Caco-2 (cell line): ENCODE measurements at regions of chr15 and their contacts with region 1.

Region 1: DNA sequence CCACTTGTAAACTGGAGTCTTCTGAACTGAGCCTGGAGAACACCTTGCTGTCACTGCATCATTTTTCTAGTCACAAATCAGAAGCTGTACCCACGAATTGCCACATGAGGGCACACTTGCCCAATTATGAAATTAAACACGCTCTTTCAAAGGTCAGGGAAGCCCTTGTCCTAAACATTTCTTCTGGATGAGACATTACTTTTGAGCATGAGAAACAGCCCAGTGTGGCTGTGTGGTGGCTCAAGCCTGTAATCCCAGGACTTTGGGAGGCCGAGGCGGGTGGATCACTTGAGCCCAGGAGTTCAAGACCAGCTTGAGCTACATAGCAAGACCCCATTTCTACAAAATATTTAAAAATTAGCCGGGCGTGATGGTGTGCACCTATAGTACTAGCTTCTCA is 27.5 kb upstream of the CFAP161 start:
- DNase-seq: peak; percentile 41 to 46
- H3K4me3 ChIP-seq: no peak overlapping the region
- H3K4me3 Mint-ChIP-seq: no peak overlapping the region
- H3K27ac Mint-ChIP-seq: no peak overlapping the region
- H3K4me1 ChIP-seq: no peaks in the 10 kb centered on the region
- H3K4me1 Mint-ChIP-seq: no peaks in the 10 kb centered on the region
- H3K27me3 ChIP-seq: no peaks in the 10 kb centered on the region; the same call in 1 of the 2 replicates
- H3K27me3 Mint-ChIP-seq: peaks cover 16% of the 10 kb centered on the region
- CTCF ChIP-seq: peak; percentile 58 to 67

Region 2: GRCh38 chr15:81256916-81257315 is 150.4 kb after region 1 on chr15:
- CTCF ChIA-PET with region 1: no interaction called
- POLR2A ChIA-PET with region 1: no interaction called
- intact Hi-C with region 1: loop called (anchors 1 kb)
- DNase-seq: no peak
- H3K4me3 ChIP-seq: no peak overlapping the region
- H3K4me3 Mint-ChIP-seq: no peak overlapping the region
- H3K27ac Mint-ChIP-seq: no peak overlapping the region
- H3K4me1 ChIP-seq: no peaks in the 10 kb centered on the region
- H3K4me1 Mint-ChIP-seq: no peaks in the 10 kb centered on the region
- H3K27me3 ChIP-seq: no peaks in the 10 kb centered on the region
- H3K27me3 Mint-ChIP-seq: peaks cover 13% of the 10 kb centered on the region
- CTCF ChIP-seq: no peak

Region 3: GRCh38 chr15:81265944-81266775 is 159.6 kb after region 1 on chr15:
- CTCF ChIA-PET with region 1: interaction called, 45 read pairs
- POLR2A ChIA-PET with region 1: no interaction called
- intact Hi-C with region 1: loop called (anchors 1 kb)
- DNase-seq: peak; percentile 71 to 73
- H3K4me3 ChIP-seq: no peak overlapping the region
- H3K4me3 Mint-ChIP-seq: no peak overlapping the region
- H3K27ac Mint-ChIP-seq: no peak overlapping the region
- H3K4me1 ChIP-seq: peaks cover 5% of the 10 kb centered on the region; the same call in 1 of the 2 replicates
- H3K4me1 Mint-ChIP-seq: no peaks in the 10 kb centered on the region
- H3K27me3 ChIP-seq: no peaks in the 10 kb centered on the region; the same call in 1 of the 2 replicates
- H3K27me3 Mint-ChIP-seq: peaks cover 12% of the 10 kb centered on the region
- CTCF ChIP-seq: peak; percentile 78 to 86

Region 4: GRCh38 chr15:81400640-81401236 is 294.2 kb after region 1 on chr15:
- CTCF ChIA-PET with region 1: no interaction called
- POLR2A ChIA-PET with region 1: no interaction called
- intact Hi-C with region 1: loop called (anchors 10 kb)
- DNase-seq: peak in 1 of 2 experiments; percentile 41
- H3K4me3 ChIP-seq: no peak overlapping the region
- H3K4me3 Mint-ChIP-seq: no peak overlapping the region
- H3K27ac Mint-ChIP-seq: no peak overlapping the region
- H3K4me1 ChIP-seq: peaks cover 16% of the 10 kb centered on the region
- H3K4me1 Mint-ChIP-seq: peaks cover 6% of the 10 kb centered on the region
- H3K27me3 ChIP-seq: no peaks in the 10 kb centered on the region
- H3K27me3 Mint-ChIP-seq: peaks cover 3% of the 10 kb centered on the region
- CTCF ChIP-seq: peak; percentile 54 to 64